HepG2 (cell line): ENCODE measurements at regions of chr7 and their contacts with region 1.

Region 1: GRCh38 chr7:2567679-2568278 is 9.0 kb downstream of the IQCE start:
- DNase-seq: peak; percentile 42
- ATAC-seq: peak; percentile 92
- H3K4me3 ChIP-seq: peak overlapping the region in 2 of 3 experiments; percentile 26 to 55; a peak in 3 of 6 replicates
- H3K27ac ChIP-seq: no peak overlapping the region
- H3K4me1 ChIP-seq: peaks cover 19% of the 10 kb centered on the region
- H3K27me3 ChIP-seq: no peaks in the 10 kb centered on the region
- CTCF ChIP-seq: peak; percentile 89
- EP300 ChIP-seq: no peak
- POLR2A ChIP-seq: no peak
- RAD21 ChIP-seq: peak; percentile 71

Region 2: DNA sequence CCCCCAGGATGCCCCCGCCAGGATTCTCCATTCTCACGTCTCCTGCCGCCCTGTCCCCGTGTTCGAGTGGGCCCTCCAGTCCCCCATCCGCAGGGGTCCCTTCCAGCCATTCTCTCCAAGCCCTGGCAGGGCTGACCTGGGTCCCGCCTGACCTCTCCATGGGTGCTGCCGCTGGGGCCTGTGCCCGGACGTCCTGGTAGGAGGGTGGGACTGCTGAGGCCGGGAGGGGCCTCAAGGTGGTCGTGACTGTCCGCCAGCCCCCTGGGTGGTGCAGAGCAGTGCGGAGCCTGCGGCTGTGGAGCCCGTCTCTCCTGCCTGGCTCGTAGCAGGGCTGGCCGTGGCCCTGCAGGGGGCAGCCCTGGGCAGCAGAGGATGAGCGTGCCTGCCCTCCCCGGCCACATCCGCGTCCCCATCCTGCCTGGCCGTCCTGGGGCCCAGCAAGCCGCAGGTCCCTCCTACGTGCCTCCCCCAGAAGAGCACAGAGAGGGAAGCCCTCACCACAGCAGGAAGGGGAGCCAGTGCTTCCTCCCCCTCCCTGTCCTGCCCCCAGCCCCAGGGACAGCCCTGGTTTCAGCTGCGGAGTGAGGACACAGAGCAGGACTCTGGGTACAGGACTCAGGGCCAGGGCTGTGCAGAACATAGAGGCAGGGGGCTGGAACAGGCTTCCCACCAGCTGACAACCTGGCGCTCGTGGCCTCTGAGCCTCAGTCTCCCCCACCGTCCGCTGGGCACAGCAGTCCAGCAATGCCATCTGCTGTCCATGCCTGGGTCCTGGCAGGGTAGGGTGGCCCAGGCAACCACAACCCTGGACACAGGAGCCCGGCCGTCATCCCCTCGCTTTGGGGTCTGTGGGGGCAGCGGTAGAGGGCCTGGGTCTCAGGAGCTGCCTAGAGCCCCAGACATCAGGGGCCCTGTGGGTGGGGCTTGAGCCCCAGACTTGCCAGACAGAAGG is 90.1 kb before region 1 on chr7:
- CTCF ChIA-PET with region 1: no interaction called
- POLR2A ChIA-PET with region 1: no interaction called
- in situ Hi-C with region 1: no loop called
- intact Hi-C with region 1: loop called (anchors 10 kb)
- DNase-seq: peak; percentile 34
- ATAC-seq: peak; percentile 92
- H3K4me3 ChIP-seq: no peak overlapping the region; a peak in 1 of 6 replicates
- H3K27ac ChIP-seq: no peak overlapping the region
- H3K4me1 ChIP-seq: peaks cover 38% of the 10 kb centered on the region
- H3K27me3 ChIP-seq: peaks cover 16 to 63% of the 10 kb centered on the region in 2 experiments
- CTCF ChIP-seq: peak; percentile 96
- EP300 ChIP-seq: no peak
- POLR2A ChIP-seq: no peak
- RAD21 ChIP-seq: peak; percentile 84

Region 3: DNA sequence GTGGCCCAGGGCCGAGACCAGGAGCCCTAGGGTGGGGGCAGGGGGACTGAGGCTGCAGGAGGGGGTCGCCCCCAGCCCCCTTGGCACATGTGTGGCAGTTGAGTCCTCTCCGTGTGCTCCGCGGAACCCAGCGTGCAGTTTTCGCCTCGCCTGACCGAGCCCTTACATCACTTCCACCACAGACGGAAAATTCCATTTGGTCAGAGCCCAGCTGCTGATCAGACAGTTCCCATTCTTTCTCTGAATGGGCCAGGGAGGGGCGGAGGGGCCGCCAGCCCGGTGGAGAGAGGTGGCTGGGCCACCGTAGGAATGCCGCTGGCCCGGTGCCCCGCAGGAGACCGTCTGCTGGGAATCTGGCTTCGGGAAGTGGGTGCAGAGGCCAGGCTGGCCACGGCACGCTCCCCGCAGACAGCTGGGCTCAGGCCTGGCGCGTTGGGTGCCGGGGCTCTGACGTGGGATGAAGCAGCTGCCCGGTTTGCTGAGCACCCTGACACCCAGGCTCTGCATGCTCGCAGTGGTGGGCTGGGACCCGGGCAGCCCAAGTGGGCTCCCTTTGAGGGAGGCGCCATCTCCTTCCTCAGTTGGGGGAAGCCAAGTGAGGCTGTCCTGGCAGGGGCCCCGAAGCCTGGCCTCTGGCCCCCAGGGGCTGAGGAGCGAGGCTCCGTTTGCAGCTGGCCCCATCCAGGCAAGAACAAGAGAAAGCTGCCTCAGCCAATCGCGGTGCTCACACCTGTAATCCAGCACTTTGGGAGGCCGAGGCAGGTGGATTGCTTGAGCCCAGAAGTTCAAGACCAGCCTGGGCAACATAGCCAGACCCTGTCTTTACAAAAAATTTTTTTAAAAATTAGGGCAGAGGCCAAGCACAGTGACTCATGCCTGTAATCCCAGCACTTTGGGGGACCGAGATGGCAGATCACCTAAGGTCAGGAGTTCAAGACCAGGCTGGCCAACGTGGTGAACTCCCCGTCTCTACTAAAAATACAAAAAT is 73.9 kb after region 1 on chr7:
- CTCF ChIA-PET with region 1: no interaction called
- POLR2A ChIA-PET with region 1: no interaction called
- in situ Hi-C with region 1: loop called (anchors 10 kb)
- intact Hi-C with region 1: loop called (anchors 2 kb)
- DNase-seq: peak; percentile 71
- ATAC-seq: peak; percentile 64
- H3K4me3 ChIP-seq: peak overlapping the region in 1 of 3 experiments; percentile 28; a peak in 1 of 6 replicates
- H3K27ac ChIP-seq: peak overlapping the region; percentile 59
- H3K4me1 ChIP-seq: peaks cover 67% of the 10 kb centered on the region
- H3K27me3 ChIP-seq: no peaks in the 10 kb centered on the region
- CTCF ChIP-seq: 0 out of 2 replicates have a peak, but pooled peaks have one; percentile 9
- EP300 ChIP-seq: peak in 1 of 2 experiments; percentile 51; a peak in 1 of 4 replicates
- POLR2A ChIP-seq: peak in 1 of 2 experiments; percentile 39; a peak in 1 of 4 replicates
- RAD21 ChIP-seq: no peak

Region 4: DNA sequence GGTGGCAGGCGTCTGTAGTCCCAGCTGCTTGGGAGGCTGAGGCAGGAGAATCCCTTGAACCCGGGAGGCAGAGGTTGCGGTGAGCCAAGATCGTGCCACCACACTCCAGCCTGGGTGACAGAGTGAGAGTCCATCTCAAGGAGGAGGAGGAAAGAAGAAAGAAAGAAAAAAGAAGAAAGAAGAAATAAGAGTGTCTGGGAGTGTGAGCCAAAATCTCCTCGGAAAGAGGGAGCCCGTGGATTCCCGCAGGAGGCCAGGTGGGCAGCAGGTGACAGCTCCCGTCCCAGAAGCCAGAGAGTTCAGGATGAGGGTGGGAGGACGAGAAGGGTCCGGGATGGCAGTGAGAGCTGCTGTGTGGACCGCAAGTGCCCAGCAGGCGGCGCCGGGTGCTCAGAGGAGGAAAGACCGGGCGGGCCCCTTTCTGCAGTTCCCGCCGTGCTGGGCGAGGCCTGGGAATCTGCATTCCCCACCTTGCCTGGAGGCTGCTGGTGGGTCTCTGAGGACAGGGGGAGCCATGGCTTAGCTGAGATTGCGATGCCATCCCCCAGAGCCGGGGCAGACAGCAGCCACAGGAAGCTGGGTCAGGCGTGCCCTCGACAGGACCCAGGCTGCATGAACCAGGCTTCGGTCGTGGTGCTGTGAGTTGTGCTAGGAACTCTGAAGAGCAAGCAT is 103.1 kb after region 1 on chr7:
- CTCF ChIA-PET with region 1: no interaction called
- POLR2A ChIA-PET with region 1: no interaction called
- in situ Hi-C with region 1: loop called (anchors 5 kb)
- intact Hi-C with region 1: loop called (anchors 5 kb)
- DNase-seq: peak; percentile 54
- ATAC-seq: peak; percentile 84
- H3K4me3 ChIP-seq: no peak overlapping the region
- H3K27ac ChIP-seq: no peak overlapping the region
- H3K4me1 ChIP-seq: peaks cover 27% of the 10 kb centered on the region
- H3K27me3 ChIP-seq: peaks cover 3 to 26% of the 10 kb centered on the region in 2 experiments; a peak in 4 of 5 replicates
- CTCF ChIP-seq: peak; percentile 95
- EP300 ChIP-seq: no peak
- POLR2A ChIP-seq: no peak
- RAD21 ChIP-seq: peak; percentile 95

Region 5: DNA sequence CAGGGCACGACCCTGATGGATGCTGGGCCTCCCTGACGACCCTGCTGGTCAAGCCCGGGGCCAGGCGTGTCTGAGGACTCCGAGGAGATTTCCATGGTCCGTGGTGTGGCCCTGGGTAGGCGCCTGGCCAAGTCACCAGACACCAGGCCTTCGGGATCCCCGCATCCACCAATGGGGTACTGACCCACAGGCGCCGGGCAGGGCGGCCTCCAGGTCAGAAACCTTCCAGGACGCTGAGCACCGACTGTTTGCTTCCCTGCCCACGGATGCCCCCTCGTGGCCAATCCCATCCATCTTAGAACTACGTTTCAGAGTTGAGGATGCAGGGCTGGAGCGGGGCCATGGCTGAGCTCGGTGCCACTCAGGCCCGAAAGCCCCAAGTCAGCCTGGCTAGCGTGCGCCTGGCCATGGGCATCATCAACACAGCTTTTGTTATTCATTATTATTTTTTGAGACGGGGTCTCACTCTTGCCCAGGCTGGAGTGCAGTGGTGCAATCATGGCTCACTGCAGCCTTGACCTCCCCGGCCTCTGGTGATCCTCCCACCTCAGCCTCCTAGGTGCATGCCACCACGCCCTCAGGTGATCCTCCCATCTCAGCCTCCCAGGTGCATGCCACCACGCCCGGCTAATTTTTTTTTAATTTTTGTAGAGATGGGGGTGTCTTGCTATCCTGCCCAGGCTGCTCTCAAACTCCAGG is 113.2 kb after region 1 on chr7:
- CTCF ChIA-PET with region 1: interaction called, 7 read pairs
- POLR2A ChIA-PET with region 1: no interaction called
- in situ Hi-C with region 1: no loop called
- intact Hi-C with region 1: loop called (anchors 1 kb)
- DNase-seq: peak; percentile 55
- ATAC-seq: peak; percentile 78
- H3K4me3 ChIP-seq: no peak overlapping the region
- H3K27ac ChIP-seq: no peak overlapping the region
- H3K4me1 ChIP-seq: peaks cover 15% of the 10 kb centered on the region
- H3K27me3 ChIP-seq: peaks cover 5 to 49% of the 10 kb centered on the region in 2 experiments; a peak in 4 of 5 replicates
- CTCF ChIP-seq: peak; percentile 94
- EP300 ChIP-seq: no peak
- POLR2A ChIP-seq: no peak
- RAD21 ChIP-seq: peak; percentile 76